ENCODE measurements at regions of chr1 and their contacts with region 1.

Region 1: GRCh38 chr1:110963691-110964399 is at the start of gene LRIF1:
- DNase-seq: peak; percentile 100
- H3K4me3 Mint-ChIP-seq: peak within 1 kb of the TSS; percentile 84
- H3K27ac Mint-ChIP-seq: peak within 1 kb of the TSS; percentile 96
- H3K4me1 Mint-ChIP-seq: peaks cover 32% of the 10 kb centered on the region
- H3K27me3 Mint-ChIP-seq: peaks cover 9% of the 10 kb centered on the region
- total RNA-seq, gene LRIF1: 12.9 to 14.4 TPM

Region 2: DNA sequence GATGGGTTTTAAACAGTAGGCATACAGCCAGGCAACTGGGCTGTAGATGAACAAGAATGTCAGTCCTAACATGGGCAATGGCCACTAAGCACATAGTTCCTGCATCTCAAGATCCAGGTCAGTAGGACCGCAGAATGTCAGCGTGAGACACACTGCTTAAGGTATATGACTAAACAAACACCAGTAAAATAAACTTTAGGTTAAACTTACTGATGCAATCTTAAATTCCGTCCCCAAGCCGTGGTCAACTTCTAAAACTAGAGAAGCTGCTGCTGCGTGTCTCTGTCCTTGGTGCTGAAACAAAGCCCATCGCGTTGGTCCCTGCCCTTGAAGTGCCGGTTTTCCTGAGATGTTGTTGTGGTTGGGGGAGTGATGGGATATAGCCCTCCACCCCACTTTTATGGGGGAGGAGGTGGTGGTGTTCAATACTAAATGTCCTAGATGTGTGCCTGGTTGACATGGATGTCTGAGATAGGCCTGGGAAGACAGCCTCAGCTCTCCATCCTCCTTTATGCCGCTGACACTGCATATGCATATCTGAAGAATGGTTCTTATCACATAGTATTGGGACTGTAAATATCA is 217.2 kb before region 1 on chr1:
- CTCF ChIA-PET with region 1: no interaction called
- POLR2A ChIA-PET with region 1: no interaction called
- intact Hi-C with region 1: no loop called
- DNase-seq: peak; percentile 70
- H3K4me3 Mint-ChIP-seq: no peak overlapping the region
- H3K27ac Mint-ChIP-seq: no peak overlapping the region
- H3K4me1 Mint-ChIP-seq: no peaks in the 10 kb centered on the region
- H3K27me3 Mint-ChIP-seq: peaks cover 15% of the 10 kb centered on the region

Region 3: GRCh38 chr1:110872745-110873720 is 90.8 kb before region 1 on chr1 and contains the start of gene CD53:
- CTCF ChIA-PET with region 1: interaction called, 14 read pairs
- POLR2A ChIA-PET with region 1: interaction called, 15 read pairs
- intact Hi-C with region 1: loop called (anchors 1 kb)
- DNase-seq: peak; percentile 63
- H3K4me3 Mint-ChIP-seq: peak within 1 kb of the TSS; percentile 98
- H3K27ac Mint-ChIP-seq: peak within 1 kb of the TSS; percentile 99
- H3K4me1 Mint-ChIP-seq: peaks cover 37% of the 10 kb centered on the region
- H3K27me3 Mint-ChIP-seq: no peaks in the 10 kb centered on the region
- total RNA-seq, gene CD53: 240 to 246 TPM

Region 4: DNA sequence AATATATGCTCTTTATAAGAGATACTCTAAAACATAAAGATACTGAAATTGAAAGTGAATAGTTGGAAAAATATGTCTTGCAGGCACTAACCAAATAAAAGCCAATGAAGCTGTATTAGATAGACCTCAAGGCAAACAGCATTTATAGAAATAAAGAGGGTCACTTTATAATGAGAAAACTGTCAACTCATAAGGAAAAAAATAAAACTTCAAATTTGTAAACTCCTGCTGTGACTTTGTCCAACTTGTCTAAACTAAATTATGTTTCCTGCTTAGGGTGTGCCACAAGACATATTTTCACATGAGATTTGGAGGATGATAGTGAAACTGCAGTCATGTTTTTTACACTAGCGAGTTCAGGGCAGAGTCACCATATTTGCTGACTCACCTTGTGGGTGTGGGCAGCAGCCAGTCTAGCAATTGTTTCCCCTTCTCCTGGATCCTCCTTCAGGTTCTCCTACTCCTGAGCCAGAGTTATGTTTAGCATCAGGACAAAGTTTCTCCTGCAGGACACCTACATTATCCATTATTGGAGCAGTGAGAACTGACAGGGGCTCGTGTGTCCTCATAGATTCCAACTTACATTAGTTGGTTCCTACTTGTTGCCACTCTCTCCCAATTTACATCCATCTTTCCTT is 47.1 kb before region 1 on chr1:
- CTCF ChIA-PET with region 1: no interaction called
- POLR2A ChIA-PET with region 1: no interaction called
- intact Hi-C with region 1: loop called (anchors 5 kb)
- DNase-seq: peak; percentile 54
- H3K4me3 Mint-ChIP-seq: no peak overlapping the region
- H3K27ac Mint-ChIP-seq: no peak overlapping the region
- H3K4me1 Mint-ChIP-seq: peaks cover 15% of the 10 kb centered on the region
- H3K27me3 Mint-ChIP-seq: no peaks in the 10 kb centered on the region

Region 5: DNA sequence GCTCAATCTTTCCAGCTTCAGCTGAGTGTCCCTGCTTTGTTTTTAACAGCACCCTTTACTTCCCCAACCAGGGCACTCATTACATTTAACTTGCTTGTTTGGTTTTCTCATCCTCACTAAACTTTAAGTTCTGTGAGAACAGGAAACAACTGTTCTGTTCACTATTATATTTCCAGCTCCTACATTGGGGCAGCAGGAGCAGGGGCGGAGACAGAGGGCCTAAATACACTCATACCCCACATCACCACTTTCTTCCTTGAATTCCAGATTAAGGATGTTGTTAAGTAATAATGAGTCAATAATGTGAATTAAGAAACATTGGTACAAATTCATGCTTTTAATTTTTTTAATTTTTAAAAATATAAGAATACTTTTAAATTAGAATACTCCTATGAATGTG is 170.0 kb after region 1 on chr1:
- CTCF ChIA-PET with region 1: no interaction called
- POLR2A ChIA-PET with region 1: no interaction called
- intact Hi-C with region 1: no loop called
- DNase-seq: no peak
- H3K4me3 Mint-ChIP-seq: no peak overlapping the region
- H3K27ac Mint-ChIP-seq: no peak overlapping the region
- H3K4me1 Mint-ChIP-seq: peaks cover 16% of the 10 kb centered on the region
- H3K27me3 Mint-ChIP-seq: no peaks in the 10 kb centered on the region

Region 6: GRCh38 chr1:111203681-111204200 is 239.9 kb after region 1 on chr1:
- CTCF ChIA-PET with region 1: no interaction called
- POLR2A ChIA-PET with region 1: no interaction called
- intact Hi-C with region 1: loop called (anchors 10 kb)
- DNase-seq: peak; percentile 93
- H3K4me3 Mint-ChIP-seq: peak overlapping the region; percentile 92
- H3K27ac Mint-ChIP-seq: peak overlapping the region; percentile 97
- H3K4me1 Mint-ChIP-seq: peaks cover 38% of the 10 kb centered on the region
- H3K27me3 Mint-ChIP-seq: no peaks in the 10 kb centered on the region

Measured in activated CD4-positive, alpha-beta memory T cell treated with anti-CD3 and anti-CD28 coated beads for 36 hours (primary cell).